Activated naive CD4-positive, alpha-beta T cell treated with anti-CD3 and anti-CD28 coated beads for 36 hours (primary cell): ENCODE measurements at regions of chr7 and their contacts with region 1.

Region 1: GRCh38 chr7:80060218-80060806 is 74.3 kb upstream of the GNAI1 start:
- DNase-seq: no peak
- H3K4me3 Mint-ChIP-seq: no peak overlapping the region
- H3K27ac Mint-ChIP-seq: no peak overlapping the region
- H3K4me1 Mint-ChIP-seq: no peaks in the 10 kb centered on the region
- H3K27me3 Mint-ChIP-seq: no peaks in the 10 kb centered on the region

Region 2: DNA sequence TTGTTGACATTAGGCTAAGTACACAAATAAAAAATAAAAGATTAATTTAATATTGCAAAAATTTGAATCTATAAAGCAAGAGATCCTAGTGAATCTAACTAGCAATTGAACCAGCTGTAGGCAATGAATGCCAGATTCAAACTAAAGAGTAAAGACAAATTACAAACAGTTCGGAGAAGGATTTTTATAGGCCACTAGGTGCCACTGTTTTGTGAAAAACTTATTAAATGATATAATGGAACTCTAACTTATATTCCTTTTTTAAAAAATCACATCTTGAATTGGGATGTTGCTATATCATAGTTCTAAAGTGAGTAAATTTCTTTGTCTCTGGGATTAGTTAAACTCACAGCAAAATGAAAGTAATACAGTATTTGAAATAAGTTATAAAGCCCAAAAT is 35.2 kb after region 1 on chr7:
- CTCF ChIA-PET with region 1: interaction called, 4 read pairs
- intact Hi-C with region 1: loop called (anchors 2 kb)
- DNase-seq: no peak
- H3K4me3 Mint-ChIP-seq: no peak overlapping the region
- H3K27ac Mint-ChIP-seq: no peak overlapping the region
- H3K4me1 Mint-ChIP-seq: no peaks in the 10 kb centered on the region
- H3K27me3 Mint-ChIP-seq: no peaks in the 10 kb centered on the region

Region 3: GRCh38 chr7:80288175-80289122 is 228.1 kb after region 1 on chr7:
- CTCF ChIA-PET with region 1: no interaction called
- intact Hi-C with region 1: loop called (anchors 1 kb)
- DNase-seq: no peak
- H3K4me3 Mint-ChIP-seq: no peak overlapping the region
- H3K27ac Mint-ChIP-seq: no peak overlapping the region
- H3K4me1 Mint-ChIP-seq: no peaks in the 10 kb centered on the region
- H3K27me3 Mint-ChIP-seq: no peaks in the 10 kb centered on the region

Region 4: GRCh38 chr7:80392229-80393169 is 332.2 kb after region 1 on chr7:
- CTCF ChIA-PET with region 1: interaction called, 3 read pairs
- intact Hi-C with region 1: loop called (anchors 1 kb)
- DNase-seq: no peak
- H3K4me3 Mint-ChIP-seq: no peak overlapping the region
- H3K27ac Mint-ChIP-seq: no peak overlapping the region
- H3K4me1 Mint-ChIP-seq: no peaks in the 10 kb centered on the region
- H3K27me3 Mint-ChIP-seq: no peaks in the 10 kb centered on the region

Region 5: DNA sequence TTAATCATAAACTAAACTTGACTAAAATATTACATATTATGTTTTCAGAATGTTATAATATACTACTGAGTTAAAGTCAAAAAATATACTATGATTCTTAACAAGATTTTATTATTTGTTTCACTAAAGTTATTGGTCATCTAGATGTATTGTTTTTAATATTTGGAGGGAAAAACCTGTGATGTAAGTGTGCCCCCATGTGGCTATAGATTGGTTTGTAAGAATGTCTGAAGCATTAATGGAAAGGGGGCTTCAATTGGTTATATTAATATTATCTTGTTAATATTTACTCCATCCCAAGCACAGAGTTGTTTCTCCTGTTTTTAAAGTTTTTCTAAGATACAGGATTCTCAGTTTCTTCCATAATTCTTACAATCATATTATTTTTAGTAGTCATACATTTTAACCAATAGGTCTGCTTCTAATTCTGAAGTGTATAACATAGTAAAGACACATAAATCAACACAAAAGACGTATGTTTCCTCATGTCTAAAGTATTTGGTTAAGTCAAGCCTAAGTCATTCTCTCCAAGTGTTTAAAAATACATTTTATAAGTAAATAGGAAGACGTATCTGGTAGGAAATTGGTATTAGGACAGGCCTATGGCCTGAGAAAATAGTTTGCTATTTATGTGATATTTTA is 393.5 kb after region 1 on chr7:
- CTCF ChIA-PET with region 1: interaction called, 4 read pairs
- intact Hi-C with region 1: loop called (anchors 1 kb)
- DNase-seq: peak; percentile 13
- H3K4me3 Mint-ChIP-seq: no peak overlapping the region
- H3K27ac Mint-ChIP-seq: no peak overlapping the region
- H3K4me1 Mint-ChIP-seq: no peaks in the 10 kb centered on the region
- H3K27me3 Mint-ChIP-seq: peaks cover 5% of the 10 kb centered on the region

Region 6: DNA sequence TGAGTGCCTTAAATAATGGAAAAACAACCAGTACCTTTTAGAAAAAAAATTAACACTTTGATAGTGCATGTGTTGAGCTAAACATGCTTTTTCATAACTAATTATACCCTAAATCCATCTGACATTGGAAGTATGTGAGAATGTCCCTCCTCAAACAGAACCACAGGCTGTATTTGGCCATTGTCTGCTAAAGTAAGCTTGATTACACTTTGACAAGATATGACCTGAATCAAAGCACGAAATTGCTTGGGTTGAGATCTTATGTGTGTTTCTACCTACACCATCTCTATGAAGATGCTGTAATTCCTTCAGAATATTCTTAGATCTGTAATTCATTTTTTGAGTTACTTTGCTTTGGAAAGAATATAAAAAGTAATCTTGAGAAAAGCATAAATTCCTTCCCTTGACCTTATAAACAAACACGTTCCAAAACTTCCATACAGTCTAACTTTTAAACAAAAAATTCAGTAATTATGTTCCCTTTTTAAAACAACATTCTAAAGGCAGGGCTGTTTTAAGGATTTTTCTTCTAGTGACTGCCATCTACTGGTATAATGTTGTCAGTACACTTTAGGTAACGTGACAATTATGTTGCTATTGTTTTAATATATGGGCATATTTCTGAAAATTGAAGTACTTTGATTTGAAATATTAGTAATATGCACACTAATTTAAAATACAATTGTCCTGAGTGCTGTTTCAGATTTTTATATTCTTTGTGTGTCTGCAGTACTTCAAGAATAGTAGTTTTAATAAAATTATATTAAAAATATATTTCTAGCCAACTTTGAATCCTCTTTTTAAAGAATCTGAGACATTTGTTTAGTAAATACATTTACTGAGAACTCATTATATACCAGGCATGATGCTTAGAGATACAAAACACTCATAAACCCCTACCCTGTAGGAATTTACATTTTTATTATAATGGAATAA is 599.1 kb after region 1 on chr7:
- CTCF ChIA-PET with region 1: interaction called, 5 read pairs
- intact Hi-C with region 1: loop called (anchors 1 kb)
- DNase-seq: no peak
- H3K4me3 Mint-ChIP-seq: no peak overlapping the region
- H3K27ac Mint-ChIP-seq: no peak overlapping the region
- H3K4me1 Mint-ChIP-seq: no peaks in the 10 kb centered on the region
- H3K27me3 Mint-ChIP-seq: no peaks in the 10 kb centered on the region